ENCODE measurements at regions of chr5 and their contacts with region 1.

Region 1: DNA sequence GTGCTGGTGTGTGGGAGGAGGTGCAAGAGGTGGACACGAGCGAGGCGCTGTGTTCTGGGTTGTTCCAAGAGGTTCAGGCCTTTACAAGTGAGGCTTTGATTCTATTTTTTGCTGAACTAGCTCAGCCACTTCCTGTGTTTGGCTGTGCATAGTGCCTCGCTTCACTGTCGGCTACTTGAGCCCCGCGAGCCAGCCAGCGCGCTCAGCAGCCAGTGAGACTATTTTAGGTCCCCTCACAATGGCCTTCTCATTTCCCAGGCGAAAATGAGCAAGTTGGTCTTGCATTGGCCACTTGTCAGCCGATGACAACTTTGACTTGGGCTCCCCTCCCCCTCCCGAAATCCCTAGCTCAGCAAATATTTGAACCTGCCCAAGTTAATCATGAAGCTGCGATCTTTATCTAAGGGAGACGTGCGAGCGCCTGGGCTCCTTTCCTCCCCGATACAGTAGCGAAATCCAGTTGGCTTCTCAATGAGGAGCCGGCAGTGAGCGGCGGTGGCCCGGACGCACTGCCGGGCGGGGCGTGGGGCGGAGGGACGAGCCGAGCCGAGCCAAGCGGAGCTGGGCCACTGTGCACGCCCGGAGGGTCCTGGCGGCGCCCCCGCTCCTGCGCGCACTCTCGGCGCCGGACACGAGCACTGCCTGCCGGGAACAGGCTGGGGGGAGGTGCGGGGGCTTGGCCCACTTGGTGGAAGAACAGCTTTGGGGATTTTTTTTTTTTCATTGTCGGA is 72.6 kb downstream of the PIK3R1 start:
- DNase-seq: peak; percentile 58 to 78 (median 65)
- ATAC-seq: peak; percentile 74 to 82 (median 76)
- H3K4me3 ChIP-seq: peak overlapping the region; percentile 8 to 60 (median 44)
- H3K27ac ChIP-seq: peak overlapping the region; percentile 32 to 89 (median 81)
- H3K4me1 ChIP-seq: peaks cover 17 to 46% (median 42%) of the 10 kb centered on the region in 3 donors
- H3K27me3 ChIP-seq: no peaks in the 10 kb centered on the region
- CTCF ChIP-seq: no peak

Region 2: DNA sequence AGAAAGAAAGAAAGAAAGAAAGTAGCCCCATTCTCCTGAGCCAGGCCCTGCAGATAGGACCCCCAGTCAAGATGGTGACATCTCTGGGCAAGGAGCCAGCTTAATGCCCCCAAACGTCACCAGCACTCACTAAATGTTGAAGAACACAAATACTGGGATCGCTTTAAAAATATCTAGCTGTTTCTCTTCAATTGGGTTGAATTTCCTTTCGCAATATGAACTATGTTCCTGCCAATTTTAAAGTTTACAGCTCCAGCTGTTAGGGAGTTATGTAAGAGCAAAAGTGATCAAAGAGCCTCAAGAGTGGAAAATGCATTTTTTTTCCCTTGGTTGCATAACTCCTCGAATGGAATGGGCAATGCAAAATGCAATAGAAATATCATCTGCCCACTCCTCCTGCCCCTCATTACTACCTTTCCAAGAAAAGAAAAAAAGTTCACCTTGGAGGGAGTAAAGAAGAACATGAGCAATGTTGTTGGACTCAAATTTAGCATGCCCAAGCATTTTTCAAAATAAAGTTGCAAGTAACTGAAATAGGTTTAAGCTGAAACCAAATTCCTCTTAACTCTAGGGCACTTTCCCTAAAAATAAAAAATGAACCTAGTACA is 316.8 kb before region 1 on chr5:
- intact Hi-C with region 1: no loop called
- DNase-seq: peak in 1 of 6 donors; percentile 20
- ATAC-seq: peak in 3 of 4 donors; percentile 62 to 73 (median 72)
- H3K4me3 ChIP-seq: no peak overlapping the region
- H3K27ac ChIP-seq: no peak overlapping the region
- H3K4me1 ChIP-seq: no peaks in the 10 kb centered on the region
- H3K27me3 ChIP-seq: no peaks in the 10 kb centered on the region
- CTCF ChIP-seq: no peak

Region 3: GRCh38 chr5:68460147-68460798 is 172.1 kb after region 1 on chr5:
- intact Hi-C with region 1: loop called in 2 of 3 experiments (anchors 5 to 10 kb)
- DNase-seq: peak in 1 of 6 donors; percentile 10
- ATAC-seq: peak; percentile 23 to 64 (median 41)
- H3K4me3 ChIP-seq: no peak overlapping the region
- H3K27ac ChIP-seq: no peak overlapping the region
- H3K4me1 ChIP-seq: peaks cover 12 to 42% (median 36%) of the 10 kb centered on the region in 3 donors
- H3K27me3 ChIP-seq: no peaks in the 10 kb centered on the region
- CTCF ChIP-seq: peak; percentile 10 to 55 (median 49)

Region 4: GRCh38 chr5:68962757-68963484 is 674.8 kb after region 1 on chr5:
- intact Hi-C with region 1: loop called in 1 of 3 experiments (anchors 10 kb)
- DNase-seq: peak; percentile 35 to 66 (median 52)
- ATAC-seq: peak; percentile 75 to 97 (median 94)
- H3K4me3 ChIP-seq: no peak overlapping the region
- H3K27ac ChIP-seq: no peak overlapping the region
- H3K4me1 ChIP-seq: no peaks in the 10 kb centered on the region
- H3K27me3 ChIP-seq: no peaks in the 10 kb centered on the region
- CTCF ChIP-seq: peak; percentile 53 to 81 (median 76)

Measured in pancreas (tissue), 10 donors.